CD4-positive, alpha-beta memory T cell (primary cell): ENCODE measurements at regions of chr22 and their contacts with region 1.

Region 1: DNA sequence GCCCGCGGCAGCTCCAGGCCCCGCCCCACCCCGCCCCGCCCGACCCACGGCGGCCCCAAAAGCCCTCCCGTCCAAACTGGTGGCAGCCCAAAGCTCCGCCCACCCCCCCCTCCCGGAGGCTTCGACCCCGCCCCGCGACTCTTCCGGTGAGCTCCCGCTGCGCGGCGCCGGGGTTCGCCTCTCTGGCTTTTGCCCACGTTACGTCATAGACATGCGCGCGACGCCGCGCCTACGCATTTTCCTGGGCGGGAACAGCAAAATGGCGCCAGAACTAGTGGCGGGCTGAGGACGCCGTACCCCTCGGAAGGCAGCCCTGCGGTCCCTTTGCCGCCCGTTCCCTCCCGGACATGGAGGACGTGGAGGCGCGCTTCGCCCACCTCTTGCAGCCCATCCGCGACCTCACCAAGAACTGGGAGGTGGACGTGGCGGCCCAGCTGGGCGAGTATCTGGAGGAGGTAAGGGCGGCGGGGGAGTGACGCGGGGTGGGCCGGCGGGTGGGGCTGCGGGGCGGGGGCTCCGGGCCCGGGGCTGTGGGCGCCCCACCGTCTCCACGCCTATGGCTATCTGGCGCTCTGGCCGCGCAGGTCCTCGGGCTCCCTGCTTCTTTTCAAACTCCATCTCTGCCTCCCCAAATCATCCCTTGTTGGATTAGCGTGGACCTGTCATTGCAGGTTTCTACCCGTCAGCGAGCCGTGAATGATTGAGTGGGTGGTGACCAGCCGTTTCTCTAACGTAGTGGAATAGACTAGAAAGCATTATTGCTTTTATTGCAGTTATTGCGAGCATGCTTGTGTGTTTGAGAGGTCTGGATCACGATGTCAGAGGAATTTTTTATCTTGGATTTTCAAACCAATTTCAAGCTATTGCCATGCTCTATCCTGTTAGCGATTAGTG is at the start of gene NCAPH2:
- DNase-seq: peak; percentile 96 to 97 (median 97)
- H3K4me3 ChIP-seq: peak within 1 kb of the TSS; percentile 84 to 98
- H3K4me3 Mint-ChIP-seq: peak within 1 kb of the TSS; percentile 92 to 98 (median 94)
- H3K27ac ChIP-seq: peak within 1 kb of the TSS; percentile 98
- H3K27ac Mint-ChIP-seq: peak within 1 kb of the TSS; percentile 90 to 99 (median 98)
- H3K4me1 ChIP-seq: peaks cover 28% of the 10 kb centered on the region
- H3K4me1 Mint-ChIP-seq: peaks cover 10 to 26% (median 19%) of the 10 kb centered on the region in 4 donors
- H3K27me3 ChIP-seq: no peaks in the 10 kb centered on the region
- H3K27me3 Mint-ChIP-seq: no peaks in the 10 kb centered on the region
- total RNA-seq, gene NCAPH2: 81.1 to 81.8 TPM

Region 2: DNA sequence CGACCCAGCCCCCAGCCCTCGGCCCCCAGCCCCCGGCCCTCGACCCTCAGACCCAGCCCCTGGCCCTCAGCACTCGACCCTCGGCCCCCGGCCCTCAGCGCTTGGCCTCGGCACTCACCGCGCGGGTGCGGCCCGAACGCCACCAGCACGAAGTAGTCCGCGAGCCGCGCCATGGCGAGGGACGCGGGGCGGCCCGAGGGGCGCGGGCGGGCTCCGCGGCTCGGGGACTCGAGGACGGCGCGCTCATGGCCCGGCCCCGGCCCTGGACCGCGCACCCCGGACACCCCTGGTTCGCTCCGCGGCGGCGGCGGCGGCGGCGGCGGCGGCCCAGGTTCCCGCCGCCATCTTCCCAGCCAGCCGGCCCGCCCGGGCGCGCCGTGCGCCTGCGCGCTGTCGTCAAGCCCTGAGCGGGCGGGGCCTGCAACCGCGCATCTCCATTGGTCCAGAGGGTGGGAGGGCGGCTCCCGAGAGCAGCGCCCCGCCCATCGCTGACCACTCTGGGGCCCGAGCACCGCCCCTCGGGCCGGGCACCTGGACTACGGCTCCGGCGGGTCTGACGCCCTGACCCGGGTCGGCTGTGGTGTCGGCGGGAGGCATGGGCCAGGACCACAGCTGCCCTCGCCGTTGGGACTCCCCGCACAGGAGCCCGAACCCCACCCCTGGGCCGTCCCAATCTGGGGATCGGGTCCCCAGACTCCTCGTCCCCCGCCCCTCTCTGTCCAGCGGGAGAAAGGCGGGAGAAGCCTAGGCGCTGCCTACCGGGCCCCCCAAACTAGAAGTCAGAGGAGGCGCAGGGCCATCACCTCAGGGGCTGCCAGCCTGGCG is 33.4 kb before region 1 on chr22 and contains the start of gene SBF1:
- CTCF ChIA-PET with region 1: no interaction called
- POLR2A ChIA-PET with region 1: interaction called, 71 read pairs
- intact Hi-C with region 1: loop called (anchors 1 kb)
- DNase-seq: peak; percentile 83 to 88 (median 84)
- H3K4me3 ChIP-seq: peak within 1 kb of the TSS; percentile 73 to 79
- H3K4me3 Mint-ChIP-seq: peak within 1 kb of the TSS; percentile 88 to 99 (median 95)
- H3K27ac ChIP-seq: peak within 1 kb of the TSS; percentile 75
- H3K27ac Mint-ChIP-seq: peak within 1 kb of the TSS; percentile 89 to 98 (median 94)
- H3K4me1 ChIP-seq: peaks cover 47% of the 10 kb centered on the region
- H3K4me1 Mint-ChIP-seq: peaks cover 28 to 62% (median 40%) of the 10 kb centered on the region in 4 donors
- H3K27me3 ChIP-seq: no peaks in the 10 kb centered on the region
- H3K27me3 Mint-ChIP-seq: no peaks in the 10 kb centered on the region
- total RNA-seq, gene SBF1: 217 to 221 TPM

Region 3: DNA sequence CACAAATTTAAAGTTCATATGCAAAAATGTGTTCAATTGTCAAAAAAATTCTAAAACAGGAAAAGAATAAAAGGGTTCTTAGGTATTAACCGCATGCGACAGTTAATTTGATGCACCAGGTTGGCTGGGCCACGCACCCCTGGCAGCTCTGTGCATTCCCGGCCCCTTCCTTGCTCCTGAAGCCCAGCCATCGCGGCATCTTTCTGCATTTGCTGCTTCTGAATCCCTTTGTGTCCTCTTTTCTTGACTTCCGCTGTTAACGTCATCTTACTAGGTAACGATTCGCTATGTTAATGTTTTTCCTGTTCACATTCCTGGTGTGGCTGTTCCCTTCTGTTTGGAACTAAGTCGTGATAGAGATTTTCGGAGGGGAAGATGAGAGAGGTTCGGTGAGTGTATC is 29.5 kb after region 1 on chr22:
- CTCF ChIA-PET with region 1: interaction called, 3 read pairs
- POLR2A ChIA-PET with region 1: interaction called, 26 read pairs
- intact Hi-C with region 1: no loop called
- DNase-seq: no peak
- H3K4me3 ChIP-seq: no peak overlapping the region
- H3K4me3 Mint-ChIP-seq: peak overlapping the region in 6 of 8 donors; percentile 49 to 70 (median 60)
- H3K27ac ChIP-seq: peak overlapping the region; percentile 99
- H3K27ac Mint-ChIP-seq: peak overlapping the region; percentile 86 to 100 (median 96)
- H3K4me1 ChIP-seq: peaks cover 41% of the 10 kb centered on the region
- H3K4me1 Mint-ChIP-seq: peaks cover 25 to 61% (median 49%) of the 10 kb centered on the region in 4 donors
- H3K27me3 ChIP-seq: no peaks in the 10 kb centered on the region
- H3K27me3 Mint-ChIP-seq: no peaks in the 10 kb centered on the region

Region 4: GRCh38 chr22:50562523-50563412 is 54.5 kb after region 1 on chr22 and contains the start of gene SYCE3:
- CTCF ChIA-PET with region 1: interaction called, 5 read pairs
- POLR2A ChIA-PET with region 1: interaction called, 21 read pairs
- intact Hi-C with region 1: loop called (anchors 1 kb)
- DNase-seq: peak; percentile 94 to 97 (median 95)
- H3K4me3 ChIP-seq: peak within 1 kb of the TSS; percentile 62 to 78
- H3K4me3 Mint-ChIP-seq: peak within 1 kb of the TSS; percentile 92 to 97 (median 95)
- H3K27ac ChIP-seq: peak within 1 kb of the TSS; percentile 55
- H3K27ac Mint-ChIP-seq: peak within 1 kb of the TSS; percentile 78 to 96 (median 91)
- H3K4me1 ChIP-seq: peaks cover 8% of the 10 kb centered on the region
- H3K4me1 Mint-ChIP-seq: peaks cover 13 to 25% (median 20%) of the 10 kb centered on the region in 4 donors
- H3K27me3 ChIP-seq: no peaks in the 10 kb centered on the region
- H3K27me3 Mint-ChIP-seq: peaks cover 0 to 2% of the 10 kb centered on the region in 2 donors
- total RNA-seq, gene SYCE3: not detected

Region 5: GRCh38 chr22:50627642-50628542 is 119.7 kb after region 1 on chr22 and contains the start of gene ARSA:
- CTCF ChIA-PET with region 1: no interaction called
- POLR2A ChIA-PET with region 1: interaction called, 5 read pairs
- intact Hi-C with region 1: loop called (anchors 2 kb)
- DNase-seq: peak; percentile 81 to 84 (median 81)
- H3K4me3 ChIP-seq: peak within 1 kb of the TSS; percentile 57 to 90
- H3K4me3 Mint-ChIP-seq: peak within 1 kb of the TSS; percentile 83 to 95 (median 90)
- H3K27ac ChIP-seq: peak within 1 kb of the TSS; percentile 84
- H3K27ac Mint-ChIP-seq: peak within 1 kb of the TSS; percentile 88 to 97 (median 91)
- H3K4me1 ChIP-seq: peaks cover 29% of the 10 kb centered on the region
- H3K4me1 Mint-ChIP-seq: peaks cover 10 to 28% (median 18%) of the 10 kb centered on the region in 4 donors
- H3K27me3 ChIP-seq: no peaks in the 10 kb centered on the region
- H3K27me3 Mint-ChIP-seq: no peaks in the 10 kb centered on the region
- total RNA-seq, gene ARSA: 83.2 to 86.8 TPM

Region 6: GRCh38 chr22:50674606-50675549 is 166.6 kb after region 1 on chr22:
- CTCF ChIA-PET with region 1: no interaction called
- POLR2A ChIA-PET with region 1: no interaction called
- intact Hi-C with region 1: no loop called
- DNase-seq: peak in 1 of 5 donors; percentile 50
- H3K4me3 ChIP-seq: peak overlapping the region in 1 of 2 donors; percentile 5
- H3K4me3 Mint-ChIP-seq: peak overlapping the region; percentile 30 to 79 (median 68)
- H3K27ac ChIP-seq: no peak overlapping the region
- H3K27ac Mint-ChIP-seq: peak overlapping the region in 1 of 7 donors; percentile 38
- H3K4me1 ChIP-seq: peaks cover 17% of the 10 kb centered on the region
- H3K4me1 Mint-ChIP-seq: peaks cover 5 to 32% (median 13%) of the 10 kb centered on the region in 4 donors
- H3K27me3 ChIP-seq: peaks cover 25% of the 10 kb centered on the region
- H3K27me3 Mint-ChIP-seq: peaks cover 23 to 36% of the 10 kb centered on the region in 2 donors